ENCODE measurements at regions of chr5 and their contacts with region 1.

Region 1: DNA sequence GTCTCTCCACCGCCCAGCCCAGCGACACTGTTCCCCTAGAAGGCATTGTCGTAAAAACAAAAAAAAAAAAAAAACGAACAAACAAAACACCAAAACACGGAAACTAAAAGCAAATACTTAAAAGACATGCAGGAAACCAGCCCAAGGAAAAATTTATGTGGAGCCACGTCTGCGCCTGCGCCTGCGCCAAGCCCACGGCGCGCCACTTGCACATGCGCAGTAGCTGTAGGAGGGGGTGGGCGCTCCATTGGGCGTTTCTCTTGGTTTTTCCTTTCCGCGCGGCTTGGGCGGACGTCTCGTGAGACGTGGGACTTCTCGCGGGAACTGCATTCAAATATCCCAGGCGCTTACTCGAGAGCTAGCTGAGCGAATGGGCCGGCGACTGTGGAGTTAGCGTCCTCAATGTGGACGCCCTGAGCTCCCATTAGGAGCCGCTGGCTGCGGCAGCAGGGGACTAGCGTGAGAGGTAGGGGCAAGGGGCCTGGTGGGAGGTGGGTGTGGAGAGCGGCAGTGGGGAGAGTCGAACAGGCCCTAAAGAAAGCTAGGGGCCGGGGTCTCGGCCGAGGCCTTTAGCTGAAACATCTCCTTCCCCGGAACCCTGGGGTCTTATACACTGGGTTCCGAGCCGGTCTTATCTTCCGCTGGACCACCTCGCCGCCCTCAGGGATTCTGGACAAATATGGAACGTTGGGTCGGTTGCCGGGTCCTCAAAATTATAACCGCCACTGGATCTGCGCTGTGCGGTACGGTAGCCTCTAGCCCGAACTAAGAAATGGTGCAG is at the start of gene SPDL1:
- DNase-seq: peak; percentile 98
- H3K4me3 Mint-ChIP-seq: peak within 1 kb of the TSS; percentile 99
- H3K27ac Mint-ChIP-seq: peak within 1 kb of the TSS; percentile 97
- H3K4me1 Mint-ChIP-seq: peaks cover 41% of the 10 kb centered on the region
- H3K27me3 Mint-ChIP-seq: peaks cover 13% of the 10 kb centered on the region
- total RNA-seq, gene SPDL1: 36.9 and 38.5 TPM in 2 replicates

Region 2: GRCh38 chr5:168486136-168486879 is 1097.3 kb before region 1 on chr5 and contains the start of gene RARS1:
- intact Hi-C with region 1: loop called (anchors 2 kb)
- DNase-seq: peak; percentile 97
- H3K4me3 Mint-ChIP-seq: peak within 1 kb of the TSS; percentile 95
- H3K27ac Mint-ChIP-seq: peak within 1 kb of the TSS; percentile 93
- H3K4me1 Mint-ChIP-seq: peaks cover 26% of the 10 kb centered on the region
- H3K27me3 Mint-ChIP-seq: no peaks in the 10 kb centered on the region
- total RNA-seq, gene RARS1: 140 and 143 TPM in 2 replicates

Region 3: GRCh38 chr5:168679515-168679920 is 904.1 kb before region 1 on chr5:
- intact Hi-C with region 1: loop called (anchors 1 kb)
- DNase-seq: peak; percentile 87
- H3K4me3 Mint-ChIP-seq: no peak overlapping the region
- H3K27ac Mint-ChIP-seq: no peak overlapping the region
- H3K4me1 Mint-ChIP-seq: peaks cover 11% of the 10 kb centered on the region
- H3K27me3 Mint-ChIP-seq: no peaks in the 10 kb centered on the region

Region 4: GRCh38 chr5:168987543-168988300 is 595.9 kb before region 1 on chr5:
- intact Hi-C with region 1: loop called (anchors 1 kb)
- DNase-seq: peak; percentile 85
- H3K4me3 Mint-ChIP-seq: no peak overlapping the region
- H3K27ac Mint-ChIP-seq: no peak overlapping the region
- H3K4me1 Mint-ChIP-seq: peaks cover 2% of the 10 kb centered on the region
- H3K27me3 Mint-ChIP-seq: peaks cover 6% of the 10 kb centered on the region

Region 5: DNA sequence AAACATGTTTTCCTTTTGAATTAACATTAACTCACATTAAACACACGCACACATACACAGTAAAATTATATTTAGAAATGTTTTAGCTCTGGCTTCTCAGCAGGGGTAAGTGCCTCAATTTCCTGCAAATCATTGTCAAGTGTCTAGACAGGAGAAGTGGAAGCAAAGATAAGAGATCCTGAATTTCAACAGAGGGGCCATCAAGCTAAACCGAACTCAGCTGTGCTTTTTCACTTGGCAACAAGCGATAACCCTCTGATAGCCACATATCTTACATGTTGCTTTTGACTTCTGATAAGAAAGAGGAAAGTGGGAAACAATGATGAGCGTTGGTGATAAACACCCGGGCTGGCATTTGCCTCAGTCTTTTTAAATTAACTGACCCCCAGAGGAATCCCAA is 79.7 kb before region 1 on chr5:
- intact Hi-C with region 1: no loop called
- DNase-seq: no peak
- H3K4me3 Mint-ChIP-seq: no peak overlapping the region
- H3K27ac Mint-ChIP-seq: no peak overlapping the region
- H3K4me1 Mint-ChIP-seq: no peaks in the 10 kb centered on the region
- H3K27me3 Mint-ChIP-seq: peaks cover 21% of the 10 kb centered on the region

Region 6: GRCh38 chr5:169650701-169651331 is 67.2 kb after region 1 on chr5:
- intact Hi-C with region 1: loop called (anchors 2 kb)
- DNase-seq: peak; percentile 79
- H3K4me3 Mint-ChIP-seq: peak overlapping the region; percentile 83
- H3K27ac Mint-ChIP-seq: peak overlapping the region; percentile 97
- H3K4me1 Mint-ChIP-seq: peaks cover 88% of the 10 kb centered on the region
- H3K27me3 Mint-ChIP-seq: no peaks in the 10 kb centered on the region

Region 7: GRCh38 chr5:169934990-169935389 is 351.4 kb after region 1 on chr5:
- intact Hi-C with region 1: no loop called
- DNase-seq: no peak
- H3K4me3 Mint-ChIP-seq: no peak overlapping the region
- H3K27ac Mint-ChIP-seq: peak overlapping the region; percentile 0
- H3K4me1 Mint-ChIP-seq: peaks cover 22% of the 10 kb centered on the region
- H3K27me3 Mint-ChIP-seq: no peaks in the 10 kb centered on the region

Region 8: GRCh38 chr5:171387345-171387969 is 1803.8 kb after region 1 on chr5 and contains the start of gene NPM1:
- intact Hi-C with region 1: loop called (anchors 5 kb)
- DNase-seq: peak; percentile 99
- H3K4me3 Mint-ChIP-seq: peak within 1 kb of the TSS; percentile 94
- H3K27ac Mint-ChIP-seq: peak within 1 kb of the TSS; percentile 100
- H3K4me1 Mint-ChIP-seq: peaks cover 41% of the 10 kb centered on the region
- H3K27me3 Mint-ChIP-seq: peaks cover 10% of the 10 kb centered on the region
- total RNA-seq, gene NPM1: 3,066 and 3,162 TPM in 2 replicates